ENCODE measurements at regions of chr2 and their contacts with region 1.

Region 1: GRCh38 chr2:164808776-164809175 is 32.8 kb downstream of the COBLL1 start:
- DNase-seq: peak; percentile 65
- H3K4me3 ChIP-seq: no peak overlapping the region
- H3K27ac ChIP-seq: no peak overlapping the region
- H3K4me1 ChIP-seq: no peaks in the 10 kb centered on the region
- H3K27me3 ChIP-seq: no peaks in the 10 kb centered on the region
- CTCF ChIP-seq: no peak
- POLR2A ChIP-seq: no peak

Region 2: GRCh38 chr2:164745012-164745805 is 63.6 kb before region 1 on chr2:
- CTCF ChIA-PET with region 1: no interaction called
- POLR2A ChIA-PET with region 1: no interaction called
- dilution Hi-C with region 1: no loop called
- intact Hi-C with region 1: no loop called
- DNase-seq: peak; percentile 48
- H3K4me3 ChIP-seq: no peak overlapping the region
- H3K27ac ChIP-seq: no peak overlapping the region
- H3K4me1 ChIP-seq: peaks cover 9% of the 10 kb centered on the region
- H3K27me3 ChIP-seq: no peaks in the 10 kb centered on the region
- CTCF ChIP-seq: no peak
- POLR2A ChIP-seq: no peak

Region 3: GRCh38 chr2:164835302-164835701 is 26.5 kb after region 1 on chr2:
- CTCF ChIA-PET with region 1: interaction called, 9 read pairs
- POLR2A ChIA-PET with region 1: no interaction called
- dilution Hi-C with region 1: no loop called
- intact Hi-C with region 1: loop called (anchors 2 kb)
- DNase-seq: no peak
- H3K4me3 ChIP-seq: no peak overlapping the region
- H3K27ac ChIP-seq: no peak overlapping the region
- H3K4me1 ChIP-seq: peaks cover 17% of the 10 kb centered on the region
- H3K27me3 ChIP-seq: no peaks in the 10 kb centered on the region
- CTCF ChIP-seq: no peak
- POLR2A ChIP-seq: no peak

Region 4: GRCh38 chr2:164873095-164873908 is 64.5 kb after region 1 on chr2:
- CTCF ChIA-PET with region 1: no interaction called
- POLR2A ChIA-PET with region 1: no interaction called
- dilution Hi-C with region 1: no loop called
- intact Hi-C with region 1: no loop called
- DNase-seq: no peak
- H3K4me3 ChIP-seq: no peak overlapping the region
- H3K27ac ChIP-seq: no peak overlapping the region
- H3K4me1 ChIP-seq: no peaks in the 10 kb centered on the region
- H3K27me3 ChIP-seq: no peaks in the 10 kb centered on the region
- CTCF ChIP-seq: no peak
- POLR2A ChIP-seq: no peak